Right ventricle myocardium inferior (tissue), 1 donor: ENCODE measurements at regions of chr5 and their contacts with region 1.

Region 1: GRCh38 chr5:32092938-32093812 is 80.9 kb downstream of the GOLPH3 start:
- DNase-seq: no peak
- ATAC-seq: peak; percentile 83

Region 2: DNA sequence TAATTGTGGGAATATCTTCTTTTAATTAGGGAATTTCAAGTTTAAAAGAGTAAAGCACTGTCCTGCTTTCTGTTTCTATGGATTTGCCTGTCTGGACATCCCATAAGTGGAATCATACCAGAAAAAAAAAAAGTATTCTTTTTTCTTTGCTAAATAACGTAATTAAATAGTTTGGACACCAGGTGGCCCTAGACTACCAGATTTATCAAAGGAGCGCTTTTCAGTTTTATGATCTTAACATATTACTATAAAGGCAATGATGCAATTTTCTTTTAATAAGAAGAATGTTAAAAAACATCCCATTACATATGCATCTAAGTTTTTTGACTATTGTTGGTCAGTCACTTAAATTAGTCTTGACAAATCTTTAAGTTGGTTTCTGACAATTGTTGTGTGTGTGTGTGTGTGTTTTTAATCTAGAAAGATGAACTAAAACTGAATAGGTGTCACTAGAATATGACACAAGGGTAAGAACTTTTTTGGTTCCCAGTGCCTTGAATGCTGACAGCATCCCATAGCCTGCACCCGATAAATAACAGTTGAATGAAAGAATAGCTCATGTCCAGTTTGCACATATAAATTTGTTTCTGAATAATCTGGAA is 511.6 kb before region 1 on chr5:
- intact Hi-C with region 1: loop called (anchors 5 kb)
- DNase-seq: no peak
- ATAC-seq: no peak

Region 3: DNA sequence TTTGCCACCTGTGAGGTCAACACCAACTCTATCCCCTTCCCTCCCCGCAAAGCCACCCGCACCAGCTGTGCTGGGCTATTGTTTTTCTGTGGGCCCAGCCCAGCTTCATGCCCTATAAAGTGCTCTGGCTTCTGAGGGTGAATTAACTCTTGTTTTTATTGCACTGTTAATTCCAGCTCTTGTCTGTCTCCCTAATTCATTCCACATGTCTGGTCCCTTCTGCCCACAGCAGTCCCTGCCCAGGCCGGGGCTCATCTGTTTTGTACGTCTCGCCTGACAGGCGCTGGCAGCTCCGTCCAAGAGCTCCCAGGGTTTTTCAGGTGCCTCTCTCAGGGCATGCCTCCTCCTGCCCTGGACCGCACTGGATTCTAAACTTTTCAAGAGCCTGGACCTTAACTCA is 335.4 kb before region 1 on chr5:
- intact Hi-C with region 1: no loop called
- DNase-seq: no peak
- ATAC-seq: no peak

Region 4: GRCh38 chr5:31825518-31826068 is 267.6 kb before region 1 on chr5:
- intact Hi-C with region 1: loop called (anchors 5 kb)
- DNase-seq: no peak
- ATAC-seq: peak; percentile 72